ENCODE measurements at regions of chr10 and their contacts with region 1.

Region 1: DNA sequence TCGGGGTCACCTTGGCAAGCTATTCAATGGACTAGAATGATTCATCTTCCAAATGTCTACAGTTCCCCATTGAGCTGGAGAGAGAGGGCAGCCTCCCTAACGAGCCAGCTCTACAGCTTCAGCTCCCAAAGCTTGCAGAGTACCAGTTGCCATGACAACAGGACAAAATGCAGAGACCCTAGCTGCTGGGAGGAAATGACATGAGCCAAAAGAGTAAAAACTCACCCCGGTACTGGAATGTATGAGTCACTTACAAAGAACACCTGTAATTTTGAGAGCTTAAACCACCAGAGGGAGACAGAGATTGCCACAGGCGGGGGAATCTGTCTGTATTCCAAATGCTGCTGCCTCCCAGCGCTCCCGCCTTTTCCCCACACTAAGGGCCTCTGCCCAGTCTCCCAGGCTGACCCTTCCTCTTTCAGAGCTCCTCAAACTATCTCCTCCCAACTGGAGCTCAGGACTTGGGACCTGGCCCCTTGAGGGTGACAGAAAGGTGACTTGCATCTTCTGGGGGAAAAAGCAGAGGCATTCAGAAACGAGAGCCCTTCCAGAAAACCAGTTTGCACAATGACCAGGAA is 95.5 kb downstream of the CUL2 start:
- DNase-seq: peak; percentile 87
- H3K4me3 ChIP-seq: no peak overlapping the region
- H3K27ac ChIP-seq: no peak overlapping the region
- H3K4me1 ChIP-seq: peaks cover 7% of the 10 kb centered on the region
- H3K27me3 ChIP-seq: no peaks in the 10 kb centered on the region
- CTCF ChIP-seq: peak; percentile 67
- POLR2A ChIP-seq: no peak

Region 2: DNA sequence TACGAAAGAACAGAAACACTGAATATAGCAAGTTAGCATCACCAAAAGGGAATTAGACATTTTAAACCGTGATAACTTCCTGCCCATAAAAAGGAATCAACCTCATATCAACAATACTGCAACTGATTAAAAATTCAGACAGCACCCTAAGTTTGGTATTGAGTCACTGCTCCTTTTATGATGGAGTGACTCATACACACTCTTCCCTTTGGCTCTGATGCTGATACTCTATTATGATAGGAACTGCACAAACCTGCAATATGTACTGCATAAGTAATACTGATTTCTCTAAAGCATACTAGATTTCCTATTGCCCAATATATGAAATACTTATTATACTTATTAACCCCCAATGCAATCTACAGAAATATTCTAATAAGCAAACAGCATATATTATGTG is 298.2 kb before region 1 on chr10:
- CTCF ChIA-PET with region 1: no interaction called
- POLR2A ChIA-PET with region 1: no interaction called
- dilution Hi-C with region 1: no loop called
- intact Hi-C with region 1: no loop called
- DNase-seq: peak; percentile 64
- H3K4me3 ChIP-seq: no peak overlapping the region
- H3K27ac ChIP-seq: no peak overlapping the region
- H3K4me1 ChIP-seq: peaks cover 47% of the 10 kb centered on the region
- H3K27me3 ChIP-seq: no peaks in the 10 kb centered on the region
- CTCF ChIP-seq: no peak
- POLR2A ChIP-seq: no peak

Region 3: GRCh38 chr10:34723750-34724149 is 270.9 kb before region 1 on chr10:
- CTCF ChIA-PET with region 1: interaction called, 26 read pairs
- POLR2A ChIA-PET with region 1: no interaction called
- dilution Hi-C with region 1: no loop called
- intact Hi-C with region 1: loop called (anchors 5 kb)
- DNase-seq: peak; percentile 76
- H3K4me3 ChIP-seq: no peak overlapping the region
- H3K27ac ChIP-seq: no peak overlapping the region
- H3K4me1 ChIP-seq: peaks cover 8% of the 10 kb centered on the region
- H3K27me3 ChIP-seq: no peaks in the 10 kb centered on the region
- CTCF ChIP-seq: peak; percentile 26 to 47
- POLR2A ChIP-seq: no peak

Region 4: GRCh38 chr10:34956752-34957151 is 37.9 kb before region 1 on chr10:
- CTCF ChIA-PET with region 1: no interaction called
- POLR2A ChIA-PET with region 1: no interaction called
- dilution Hi-C with region 1: no loop called
- intact Hi-C with region 1: no loop called
- DNase-seq: no peak
- H3K4me3 ChIP-seq: no peak overlapping the region
- H3K27ac ChIP-seq: no peak overlapping the region
- H3K4me1 ChIP-seq: no peaks in the 10 kb centered on the region
- H3K27me3 ChIP-seq: no peaks in the 10 kb centered on the region
- CTCF ChIP-seq: no peak
- POLR2A ChIP-seq: no peak

Region 5: DNA sequence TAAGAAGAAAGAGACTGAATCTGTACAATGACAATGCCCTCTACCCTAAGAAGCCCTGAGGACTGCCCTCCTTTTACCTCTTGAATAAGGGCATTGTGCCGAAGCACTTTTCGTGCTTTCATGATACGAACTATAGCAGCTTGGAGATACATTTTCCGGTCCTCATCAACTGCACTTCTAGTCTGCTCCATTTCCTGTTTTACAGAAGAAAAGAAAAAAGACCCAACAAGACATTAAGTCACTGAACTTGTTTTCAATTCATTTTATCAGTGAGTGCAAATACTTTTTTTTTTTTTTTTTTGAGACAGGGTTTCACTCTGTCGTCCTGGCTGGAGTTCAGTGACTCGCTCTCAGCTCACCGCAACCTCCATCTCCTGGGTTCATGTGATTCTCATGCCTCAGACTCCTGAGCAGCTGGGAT is 17.1 kb after region 1 on chr10:
- CTCF ChIA-PET with region 1: interaction called, 19 read pairs
- POLR2A ChIA-PET with region 1: interaction called, 3 read pairs
- dilution Hi-C with region 1: no loop called
- intact Hi-C with region 1: no loop called
- DNase-seq: no peak
- H3K4me3 ChIP-seq: no peak overlapping the region
- H3K27ac ChIP-seq: no peak overlapping the region
- H3K4me1 ChIP-seq: no peaks in the 10 kb centered on the region
- H3K27me3 ChIP-seq: no peaks in the 10 kb centered on the region
- CTCF ChIP-seq: no peak
- POLR2A ChIP-seq: no peak

Region 6: GRCh38 chr10:35058134-35058533 is 63.5 kb after region 1 on chr10:
- CTCF ChIA-PET with region 1: interaction called, 10 read pairs
- POLR2A ChIA-PET with region 1: no interaction called
- dilution Hi-C with region 1: no loop called
- intact Hi-C with region 1: no loop called
- DNase-seq: peak; percentile 85
- H3K4me3 ChIP-seq: peak overlapping the region in 1 of 3 experiments; percentile 16
- H3K27ac ChIP-seq: peak overlapping the region; percentile 97
- H3K4me1 ChIP-seq: peaks cover 43% of the 10 kb centered on the region
- H3K27me3 ChIP-seq: no peaks in the 10 kb centered on the region
- CTCF ChIP-seq: no peak
- POLR2A ChIP-seq: peak; percentile 47

Region 7: GRCh38 chr10:35126530-35127296 is 132.1 kb after region 1 on chr10 and contains the start of gene CREM:
- CTCF ChIA-PET with region 1: interaction called, 6 read pairs
- POLR2A ChIA-PET with region 1: no interaction called
- dilution Hi-C with region 1: no loop called
- intact Hi-C with region 1: loop called (anchors 5 kb)
- DNase-seq: peak; percentile 97
- H3K4me3 ChIP-seq: peak within 1 kb of the TSS; percentile 65 to 85 (median 83)
- H3K27ac ChIP-seq: peak within 1 kb of the TSS; percentile 98
- H3K4me1 ChIP-seq: peaks cover 20% of the 10 kb centered on the region
- H3K27me3 ChIP-seq: no peaks in the 10 kb centered on the region
- CTCF ChIP-seq: peak; percentile 42 to 86
- POLR2A ChIP-seq: peak; percentile 92
- total RNA-seq, gene CREM: 34.8 and 35.5 TPM in 2 replicates

Region 8: GRCh38 chr10:36880898-36881297 is 1886.2 kb after region 1 on chr10:
- CTCF ChIA-PET with region 1: interaction called, 12 read pairs
- POLR2A ChIA-PET with region 1: no interaction called
- dilution Hi-C with region 1: no loop called
- intact Hi-C with region 1: no loop called
- DNase-seq: peak; percentile 20
- H3K4me3 ChIP-seq: no peak overlapping the region
- H3K27ac ChIP-seq: no peak overlapping the region
- H3K4me1 ChIP-seq: no peaks in the 10 kb centered on the region
- H3K27me3 ChIP-seq: peaks cover 0 to 4% of the 10 kb centered on the region in 2 experiments
- CTCF ChIP-seq: peak; percentile 14 to 48
- POLR2A ChIP-seq: no peak